Activated T-helper 1 cell treated with anti-CD3 and anti-CD28 coated beads, Interleukin-12 subunit alpha, Interleukin-12 subunit beta, Interleukin-2, Interleukin-4 antibody, amounts not matched to agents 30 ng/mL and 10 ng/mL and 1 ng/mL, durations not matched to agents 14 hours and 24 hours and 36 hours (primary cell): ENCODE measurements at regions of chr1 and their contacts with region 1.

Region 1: GRCh38 chr1:228405987-228406265 is 709 bp downstream of the TRIM11 start:
- DNase-seq: no peak
- H3K4me3 Mint-ChIP-seq: peak overlapping the region; percentile 98
- H3K27ac Mint-ChIP-seq: peak overlapping the region; percentile 97
- H3K4me1 Mint-ChIP-seq: peaks cover 49% of the 10 kb centered on the region
- H3K27me3 Mint-ChIP-seq: no peaks in the 10 kb centered on the region

Region 2: DNA sequence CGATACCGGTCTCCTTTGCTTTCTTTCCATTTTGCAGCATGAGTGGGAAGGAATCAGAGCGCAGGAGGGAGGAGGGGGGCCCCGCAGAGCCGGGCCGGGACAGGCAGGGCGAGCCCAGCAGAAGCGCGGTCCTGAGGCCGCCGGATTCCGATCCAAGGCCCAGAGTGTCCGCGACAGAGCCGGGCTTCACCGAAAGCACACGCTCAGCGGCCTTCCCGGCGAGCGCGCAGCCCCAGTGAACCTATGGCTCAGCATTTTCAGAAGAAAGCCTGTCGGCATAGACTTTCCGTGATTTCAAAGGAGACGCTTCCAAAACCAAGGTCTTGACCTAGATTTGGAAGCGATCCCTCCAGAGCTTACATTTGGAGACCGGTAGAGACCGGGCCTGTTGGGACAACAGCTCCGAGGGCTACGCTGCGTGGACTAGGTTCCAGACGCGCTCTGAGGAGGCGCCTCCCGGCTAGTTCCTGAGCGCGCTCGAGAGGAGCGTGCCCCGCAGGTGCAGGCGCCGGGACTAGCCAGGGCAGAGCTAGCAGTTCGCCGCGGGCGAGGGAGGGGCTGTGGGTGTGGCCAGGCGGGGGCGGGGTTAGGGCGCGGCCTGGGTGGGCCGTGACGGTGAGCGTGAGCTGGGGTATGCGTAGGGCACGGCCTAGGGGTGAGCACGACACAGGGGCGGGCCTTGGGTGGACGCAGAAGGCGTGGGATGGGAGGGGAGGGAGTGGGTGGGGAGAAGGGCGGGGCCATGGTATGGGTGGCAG is 618.2 kb before region 1 on chr1:
- intact Hi-C with region 1: loop called (anchors 5 kb)
- DNase-seq: peak; percentile 86
- H3K4me3 Mint-ChIP-seq: peak overlapping the region; percentile 82
- H3K27ac Mint-ChIP-seq: peak overlapping the region; percentile 34
- H3K4me1 Mint-ChIP-seq: peaks cover 23% of the 10 kb centered on the region
- H3K27me3 Mint-ChIP-seq: peaks cover 9% of the 10 kb centered on the region

Region 3: DNA sequence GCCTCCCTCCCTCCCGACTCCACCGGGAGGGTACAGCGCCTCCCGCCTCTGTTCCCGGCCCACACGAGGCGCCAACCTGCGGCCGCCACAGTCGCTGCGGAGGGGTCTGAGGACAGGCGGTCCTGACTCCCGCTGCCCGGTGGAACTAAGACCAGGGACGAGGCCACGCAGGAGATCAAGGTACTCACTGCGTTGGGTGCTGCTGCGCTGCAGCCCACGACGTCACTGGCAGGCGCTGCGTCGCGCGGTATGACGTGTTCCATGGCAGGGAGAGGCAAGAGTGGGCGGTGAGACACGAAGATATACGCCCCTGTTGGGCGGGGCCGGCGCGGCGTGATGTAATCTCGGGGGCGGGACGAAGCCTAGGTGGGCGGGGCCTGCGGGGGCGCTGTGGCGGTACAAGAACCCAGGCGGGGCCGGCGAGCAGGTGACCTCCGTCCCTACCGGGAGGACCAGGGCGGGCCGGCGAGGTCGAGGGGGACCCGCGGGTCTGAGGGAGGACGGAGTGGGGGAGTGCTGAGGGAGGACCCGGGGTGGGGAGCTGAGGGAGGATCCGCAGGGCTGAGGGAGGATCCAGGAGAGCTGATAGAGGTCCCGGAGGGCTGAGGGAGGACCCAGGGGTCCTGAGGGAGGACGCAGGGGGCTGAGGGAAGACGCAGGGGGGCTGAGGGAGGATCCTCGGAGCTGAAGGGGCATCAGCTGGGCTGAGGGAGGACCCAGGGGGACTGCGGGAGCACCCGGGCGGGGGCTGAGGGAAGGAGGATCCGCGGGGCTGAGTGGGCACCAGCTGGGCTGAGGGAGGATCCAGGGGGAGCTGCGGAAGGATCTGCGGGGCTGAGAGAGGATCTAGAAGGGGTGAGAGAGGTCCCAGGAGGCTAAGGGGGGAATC is 296.6 kb before region 1 on chr1 and contains the start of gene MRPL55:
- intact Hi-C with region 1: loop called (anchors 1 kb)
- DNase-seq: peak; percentile 99
- H3K4me3 Mint-ChIP-seq: peak within 1 kb of the TSS; percentile 87
- H3K27ac Mint-ChIP-seq: peak within 1 kb of the TSS; percentile 89
- H3K4me1 Mint-ChIP-seq: peaks cover 28% of the 10 kb centered on the region
- H3K27me3 Mint-ChIP-seq: peaks cover 3% of the 10 kb centered on the region
- total RNA-seq, gene MRPL55: 53.3 and 61.7 TPM in 2 replicates

Region 4: GRCh38 chr1:228275739-228276421 is 130.0 kb before region 1 on chr1:
- intact Hi-C with region 1: loop called (anchors 1 kb)
- DNase-seq: peak; percentile 83
- H3K4me3 Mint-ChIP-seq: peak overlapping the region; percentile 73
- H3K27ac Mint-ChIP-seq: no peak overlapping the region
- H3K4me1 Mint-ChIP-seq: peaks cover 8% of the 10 kb centered on the region
- H3K27me3 Mint-ChIP-seq: no peaks in the 10 kb centered on the region

Region 5: GRCh38 chr1:228457396-228458176 is 51.7 kb after region 1 on chr1:
- intact Hi-C with region 1: loop called (anchors 1 kb)
- DNase-seq: peak; percentile 89
- H3K4me3 Mint-ChIP-seq: peak overlapping the region; percentile 99
- H3K27ac Mint-ChIP-seq: peak overlapping the region; percentile 100
- H3K4me1 Mint-ChIP-seq: peaks cover 59% of the 10 kb centered on the region
- H3K27me3 Mint-ChIP-seq: peaks cover 2% of the 10 kb centered on the region

Region 6: GRCh38 chr1:228500901-228501871 is 95.3 kb after region 1 on chr1:
- intact Hi-C with region 1: loop called (anchors 5 kb)
- DNase-seq: peak; percentile 77
- H3K4me3 Mint-ChIP-seq: peak overlapping the region; percentile 74
- H3K27ac Mint-ChIP-seq: no peak overlapping the region
- H3K4me1 Mint-ChIP-seq: peaks cover 26% of the 10 kb centered on the region
- H3K27me3 Mint-ChIP-seq: peaks cover 7% of the 10 kb centered on the region